ENCODE measurements at regions of chr21 and their contacts with region 1.

Region 1: GRCh38 chr21:43810505-43811261 is 21.3 kb downstream of the RRP1 start:
- DNase-seq: peak; percentile 83 to 87
- ATAC-seq: peak; percentile 89 to 98 (median 90)
- H3K4me3 ChIP-seq: no peak overlapping the region
- H3K4me3 Mint-ChIP-seq: no peak overlapping the region
- H3K27ac ChIP-seq: no peak overlapping the region
- H3K27ac Mint-ChIP-seq: peak overlapping the region in 1 of 2 donors; percentile 69
- H3K4me1 ChIP-seq: peaks cover 21% of the 10 kb centered on the region
- H3K4me1 Mint-ChIP-seq: peaks cover 0 to 14% of the 10 kb centered on the region in 2 donors
- H3K27me3 ChIP-seq: no peaks in the 10 kb centered on the region
- H3K27me3 Mint-ChIP-seq: peaks cover 0 to 3% of the 10 kb centered on the region in 2 donors
- CTCF ChIP-seq: peak; percentile 78

Region 2: DNA sequence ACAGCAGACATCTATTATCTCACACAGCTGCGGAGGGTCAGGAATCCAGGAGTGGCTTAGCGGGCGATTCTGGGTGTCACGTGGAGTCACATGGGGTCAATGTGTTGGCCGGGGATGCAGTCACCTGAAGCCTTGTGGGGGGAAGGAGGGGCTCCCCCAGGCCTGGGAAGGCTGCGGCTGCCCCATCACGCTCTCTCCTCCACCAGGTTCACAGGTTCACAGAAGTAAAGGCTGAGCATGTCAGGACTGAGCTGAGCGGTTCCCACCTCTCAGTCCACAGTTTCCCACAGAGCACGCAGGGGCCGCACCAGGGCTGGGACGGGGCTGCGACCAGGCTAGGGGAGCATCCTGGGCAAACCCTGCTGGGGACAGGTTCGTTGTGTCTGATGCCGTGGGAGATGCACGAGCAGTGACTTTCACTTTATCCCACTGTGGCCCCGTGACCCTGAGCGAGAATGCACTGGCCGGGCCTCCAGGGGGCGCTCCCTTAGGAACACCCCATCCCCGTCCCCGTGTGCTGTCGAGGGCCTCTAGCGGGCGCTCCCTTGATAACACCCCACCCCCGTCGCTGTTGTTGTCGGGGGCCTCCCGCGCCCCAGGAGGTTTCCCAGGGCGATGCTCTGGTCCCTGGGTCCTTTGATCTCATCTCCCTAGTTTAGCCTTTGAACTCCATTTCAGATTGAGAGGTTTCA is 128.2 kb after region 1 on chr21:
- intact Hi-C with region 1: loop called (anchors 2 kb)
- DNase-seq: peak; percentile 86 to 94
- ATAC-seq: peak; percentile 98 to 100 (median 99)
- H3K4me3 ChIP-seq: peak overlapping the region; percentile 47
- H3K4me3 Mint-ChIP-seq: peak overlapping the region; percentile 84
- H3K27ac ChIP-seq: no peak overlapping the region
- H3K27ac Mint-ChIP-seq: peak overlapping the region in 1 of 2 donors; percentile 81
- H3K4me1 ChIP-seq: peaks cover 12% of the 10 kb centered on the region
- H3K4me1 Mint-ChIP-seq: peaks cover 15 to 19% of the 10 kb centered on the region in 2 donors
- H3K27me3 ChIP-seq: no peaks in the 10 kb centered on the region
- H3K27me3 Mint-ChIP-seq: no peaks in the 10 kb centered on the region
- CTCF ChIP-seq: peak; percentile 100

Region 3: GRCh38 chr21:43975495-43975993 is 164.9 kb after region 1 on chr21:
- intact Hi-C with region 1: loop called (anchors 1 kb)
- DNase-seq: peak; percentile 74 to 88
- ATAC-seq: peak; percentile 78 to 93 (median 88)
- H3K4me3 ChIP-seq: no peak overlapping the region
- H3K4me3 Mint-ChIP-seq: no peak overlapping the region
- H3K27ac ChIP-seq: no peak overlapping the region
- H3K27ac Mint-ChIP-seq: peak overlapping the region; percentile 4 to 81
- H3K4me1 ChIP-seq: peaks cover 12% of the 10 kb centered on the region
- H3K4me1 Mint-ChIP-seq: peaks cover 25 to 27% of the 10 kb centered on the region in 2 donors
- H3K27me3 ChIP-seq: no peaks in the 10 kb centered on the region
- H3K27me3 Mint-ChIP-seq: no peaks in the 10 kb centered on the region
- CTCF ChIP-seq: peak; percentile 78

Region 4: DNA sequence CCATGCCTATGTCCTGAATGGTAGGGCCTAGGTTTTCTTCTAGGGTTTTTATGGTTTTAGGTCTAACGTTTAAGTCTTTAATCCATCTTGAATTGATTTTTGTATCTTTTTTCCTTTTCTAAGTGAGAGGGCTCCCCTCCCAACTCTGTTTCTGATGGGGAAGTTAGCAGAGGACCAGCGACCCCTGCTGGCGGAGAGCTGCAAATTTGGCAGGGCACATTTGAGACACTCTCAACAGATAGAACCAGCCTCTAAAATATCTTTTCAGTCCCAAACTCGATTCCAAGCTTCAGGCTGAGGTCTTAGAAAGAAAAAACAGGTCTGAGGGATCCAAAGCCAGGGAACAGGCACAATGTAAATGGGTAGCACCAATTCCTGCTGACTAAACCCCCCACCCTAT is 677.1 kb after region 1 on chr21:
- intact Hi-C with region 1: loop called (anchors 10 kb)
- DNase-seq: peak; percentile 48 to 62
- ATAC-seq: peak in 2 of 3 donors; percentile 48 to 58
- H3K4me3 ChIP-seq: no peak overlapping the region
- H3K4me3 Mint-ChIP-seq: no peak overlapping the region
- H3K27ac ChIP-seq: no peak overlapping the region
- H3K27ac Mint-ChIP-seq: no peak overlapping the region
- H3K4me1 ChIP-seq: no peaks in the 10 kb centered on the region
- H3K4me1 Mint-ChIP-seq: peaks cover 0 to 9% of the 10 kb centered on the region in 2 donors
- H3K27me3 ChIP-seq: no peaks in the 10 kb centered on the region
- H3K27me3 Mint-ChIP-seq: peaks cover 12 to 13% of the 10 kb centered on the region in 2 donors
- CTCF ChIP-seq: peak; percentile 60

Measured in natural killer cell (primary cell).